GM12878 (cell line): ENCODE measurements at regions of chr11 and their contacts with region 1.

Region 1: DNA sequence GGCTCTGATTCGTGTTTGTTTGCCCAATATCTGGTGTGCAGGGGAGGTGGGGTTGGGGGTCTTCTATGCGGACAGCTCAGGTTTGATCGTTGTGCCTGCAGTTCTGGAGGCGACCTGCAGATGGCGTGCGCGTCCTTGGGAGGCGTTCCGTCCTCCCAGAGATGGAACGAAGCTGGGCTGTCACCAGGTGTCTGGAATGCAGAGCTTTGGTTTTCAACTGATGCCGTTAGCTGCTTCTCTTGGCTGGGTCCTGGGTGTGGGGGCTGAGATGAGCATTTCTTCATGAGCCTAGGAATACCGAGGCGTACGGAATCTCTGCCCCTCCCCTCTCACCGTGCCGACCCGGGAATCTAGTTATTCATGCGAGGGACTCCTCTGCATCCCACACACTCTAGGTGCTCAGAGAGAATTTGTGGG is 98.6 kb downstream of the CEP164 start:
- DNase-seq: no peak
- ATAC-seq: peak; percentile 83
- H3K4me3 ChIP-seq: no peak overlapping the region
- H3K27ac ChIP-seq: no peak overlapping the region
- H3K4me1 ChIP-seq: no peaks in the 10 kb centered on the region
- H3K27me3 ChIP-seq: no peaks in the 10 kb centered on the region
- CTCF ChIP-seq: peak; percentile 96 to 100 (median 98)
- EP300 ChIP-seq: no peak
- POLR2A ChIP-seq: no peak
- RAD21 ChIP-seq: peak; percentile 95

Region 2: DNA sequence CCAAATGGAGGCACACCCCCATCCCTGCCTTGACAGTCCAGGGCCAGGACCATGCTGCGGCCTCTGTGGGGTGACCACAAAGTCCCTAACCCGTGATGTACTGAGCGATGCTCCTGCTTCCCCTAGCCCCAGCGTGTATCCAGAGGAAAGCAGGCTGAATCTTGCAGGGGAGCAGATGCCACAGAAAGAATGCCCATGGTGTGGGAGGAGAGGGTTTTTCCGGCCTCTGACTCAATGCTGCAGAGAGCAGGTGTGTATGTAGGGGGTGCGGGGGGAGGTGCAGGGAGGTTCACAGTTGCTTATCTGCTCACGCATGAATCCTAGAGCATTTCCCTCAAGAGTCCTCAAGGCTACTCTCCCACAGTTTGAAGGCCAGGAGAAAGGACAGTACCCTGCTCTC is 32.0 kb after region 1 on chr11:
- CTCF ChIA-PET with region 1: interaction called, 39 read pairs
- POLR2A ChIA-PET with region 1: no interaction called
- RAD21 ChIA-PET with region 1: interaction called, 22 read pairs
- SMC1A ChIA-PET with region 1: interaction called, 21 read pairs
- in situ Hi-C with region 1: no loop called
- intact Hi-C with region 1: no loop called
- DNase-seq: no peak
- ATAC-seq: peak; percentile 70
- H3K4me3 ChIP-seq: peak overlapping the region; percentile 48; the same call in 1 of the 2 replicates
- H3K27ac ChIP-seq: peak overlapping the region; percentile 57
- H3K4me1 ChIP-seq: peaks cover 48% of the 10 kb centered on the region
- H3K27me3 ChIP-seq: no peaks in the 10 kb centered on the region
- CTCF ChIP-seq: no peak
- EP300 ChIP-seq: peak; percentile 58 to 81; a peak in 3 of 4 replicates
- POLR2A ChIP-seq: 0 out of 2 replicates have a peak, but pooled peaks have one; percentile 36
- RAD21 ChIP-seq: no peak

Region 3: DNA sequence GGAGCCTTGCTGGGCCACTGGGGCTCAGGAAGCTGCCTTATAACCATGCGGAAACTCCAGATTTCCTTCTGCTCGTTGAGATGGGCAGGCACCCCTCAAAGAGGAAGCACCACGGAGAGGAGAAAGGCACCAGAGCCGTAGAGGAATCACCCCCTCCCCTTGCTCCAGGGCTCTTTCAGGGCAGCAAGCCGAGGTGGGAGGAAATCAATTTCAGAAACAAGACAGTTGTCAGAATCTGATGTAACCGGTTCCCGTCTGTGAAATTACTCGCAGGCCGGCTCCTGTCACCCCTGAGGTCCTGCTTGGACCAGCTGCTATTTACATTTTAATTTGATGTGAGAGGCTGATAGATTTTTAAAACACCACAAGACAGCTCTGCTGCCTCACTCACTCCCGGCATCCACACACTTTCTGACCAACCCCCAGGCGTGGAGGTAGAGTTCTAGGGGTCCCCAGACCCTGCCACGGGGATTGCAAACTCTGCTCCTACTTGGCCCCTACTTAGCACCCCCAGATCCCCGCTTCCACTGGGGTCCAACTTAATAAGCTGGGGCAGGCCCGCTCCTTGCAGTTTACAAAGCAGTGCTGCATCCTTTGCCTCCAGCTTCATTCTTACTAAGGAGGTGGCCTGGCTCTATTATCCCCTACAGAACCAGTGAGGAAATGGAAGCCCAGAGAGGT is 63.9 kb after region 1 on chr11:
- CTCF ChIA-PET with region 1: interaction called, 12 read pairs
- POLR2A ChIA-PET with region 1: no interaction called
- RAD21 ChIA-PET with region 1: interaction called, 6 read pairs
- SMC1A ChIA-PET with region 1: interaction called, 10 read pairs
- in situ Hi-C with region 1: no loop called
- intact Hi-C with region 1: no loop called
- DNase-seq: no peak
- ATAC-seq: peak; percentile 39
- H3K4me3 ChIP-seq: no peak overlapping the region
- H3K27ac ChIP-seq: no peak overlapping the region
- H3K4me1 ChIP-seq: no peaks in the 10 kb centered on the region
- H3K27me3 ChIP-seq: peaks cover under 1 to 8% of the 10 kb centered on the region in 2 experiments
- CTCF ChIP-seq: no peak
- EP300 ChIP-seq: no peak
- POLR2A ChIP-seq: no peak
- RAD21 ChIP-seq: no peak

Region 4: DNA sequence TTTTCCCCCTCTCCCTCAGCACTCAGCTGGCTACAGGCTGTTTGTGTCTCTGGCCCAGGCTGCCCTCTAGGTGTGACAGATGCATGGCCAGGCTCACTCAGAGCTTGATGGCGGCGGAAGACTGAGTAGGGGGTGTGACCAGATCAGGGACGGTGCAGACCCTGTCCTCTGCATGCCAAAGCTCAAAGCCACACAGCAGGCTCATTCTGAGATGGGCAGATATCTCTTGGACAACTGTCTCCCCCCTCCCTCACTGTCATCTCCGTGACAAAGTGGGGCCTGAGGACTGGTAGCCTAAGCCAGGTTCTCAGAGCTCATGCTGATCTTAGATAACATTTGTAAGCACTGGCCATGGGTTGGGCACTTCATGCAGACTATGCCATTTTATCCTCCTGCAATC is 139.4 kb after region 1 on chr11:
- CTCF ChIA-PET with region 1: interaction called, 10 read pairs
- POLR2A ChIA-PET with region 1: no interaction called
- RAD21 ChIA-PET with region 1: no interaction called
- SMC1A ChIA-PET with region 1: interaction called, 4 read pairs
- in situ Hi-C with region 1: no loop called
- intact Hi-C with region 1: no loop called
- DNase-seq: no peak
- ATAC-seq: no peak
- H3K4me3 ChIP-seq: no peak overlapping the region
- H3K27ac ChIP-seq: no peak overlapping the region
- H3K4me1 ChIP-seq: no peaks in the 10 kb centered on the region
- H3K27me3 ChIP-seq: peaks cover 1 to 3% of the 10 kb centered on the region in 2 experiments; a peak in 2 of 4 replicates
- CTCF ChIP-seq: 0 out of 6 replicates have a peak, but pooled peaks of 1 of the 3 experiments have one; percentile 0
- EP300 ChIP-seq: no peak
- POLR2A ChIP-seq: no peak
- RAD21 ChIP-seq: no peak

Region 5: GRCh38 chr11:117621226-117621625 is 194.9 kb after region 1 on chr11:
- CTCF ChIA-PET with region 1: interaction called, 156 read pairs
- POLR2A ChIA-PET with region 1: no interaction called
- RAD21 ChIA-PET with region 1: interaction called, 35 read pairs
- SMC1A ChIA-PET with region 1: interaction called, 32 read pairs
- in situ Hi-C with region 1: loop called (anchors 5 kb)
- intact Hi-C with region 1: loop called (anchors 1 kb)
- DNase-seq: no peak
- ATAC-seq: peak; percentile 65
- H3K4me3 ChIP-seq: no peak overlapping the region
- H3K27ac ChIP-seq: no peak overlapping the region
- H3K4me1 ChIP-seq: no peaks in the 10 kb centered on the region
- H3K27me3 ChIP-seq: no peaks in the 10 kb centered on the region; a peak in 1 of 4 replicates
- CTCF ChIP-seq: peak; percentile 37 to 68 (median 65)
- EP300 ChIP-seq: no peak
- POLR2A ChIP-seq: no peak
- RAD21 ChIP-seq: peak; percentile 44

Region 6: DNA sequence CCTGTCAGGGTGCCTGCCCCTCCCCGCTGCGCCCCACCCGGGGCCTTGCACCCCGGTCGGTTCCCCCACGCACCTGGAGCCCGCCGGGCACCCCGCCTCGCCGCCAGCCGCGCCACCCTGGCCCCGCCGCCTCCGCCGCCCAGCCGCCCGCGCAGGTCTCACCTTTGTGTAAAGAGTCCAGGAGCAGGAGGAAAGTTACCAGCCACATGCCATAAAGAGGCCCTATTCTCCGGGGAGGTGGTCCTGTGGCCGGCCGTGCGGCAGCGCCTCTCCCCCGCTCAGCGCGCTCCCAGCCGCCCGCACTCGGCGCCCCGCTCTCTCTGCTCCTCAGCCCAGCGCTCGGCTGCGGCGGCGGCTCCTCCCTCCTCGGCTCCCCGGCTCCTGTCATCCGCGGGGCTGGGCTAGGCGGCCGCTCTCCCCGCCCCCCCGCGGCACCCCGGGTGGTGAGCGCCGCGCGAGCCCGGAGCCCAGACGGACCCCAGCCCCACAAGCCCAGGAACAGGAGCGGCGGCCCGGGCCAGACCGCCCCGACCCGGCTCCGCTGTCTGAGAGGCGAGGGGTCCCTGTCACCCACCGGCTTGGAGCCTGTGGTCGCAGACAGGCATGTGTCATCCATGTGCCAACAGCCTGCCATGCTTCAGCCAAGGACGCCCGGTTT is 370.7 kb after region 1 on chr11 and contains the start of gene DSCAML1:
- CTCF ChIA-PET with region 1: interaction called, 25 read pairs
- POLR2A ChIA-PET with region 1: no interaction called
- RAD21 ChIA-PET with region 1: interaction called, 12 read pairs
- SMC1A ChIA-PET with region 1: interaction called, 8 read pairs
- in situ Hi-C with region 1: no loop called
- intact Hi-C with region 1: no loop called
- DNase-seq: no peak
- ATAC-seq: no peak
- H3K4me3 ChIP-seq: no peak within 1 kb of the TSS
- H3K27ac ChIP-seq: no peak within 1 kb of the TSS
- H3K4me1 ChIP-seq: no peaks in the 10 kb centered on the region
- H3K27me3 ChIP-seq: peaks cover 4 to 8% of the 10 kb centered on the region in 2 experiments; a peak in 3 of 4 replicates
- CTCF ChIP-seq: no peak
- EP300 ChIP-seq: no peak
- POLR2A ChIP-seq: no peak
- RAD21 ChIP-seq: no peak
- polyA plus RNA-seq, gene DSCAML1: 0.03 TPM in 1 of 2 experiments, not detected in the other

Region 7: DNA sequence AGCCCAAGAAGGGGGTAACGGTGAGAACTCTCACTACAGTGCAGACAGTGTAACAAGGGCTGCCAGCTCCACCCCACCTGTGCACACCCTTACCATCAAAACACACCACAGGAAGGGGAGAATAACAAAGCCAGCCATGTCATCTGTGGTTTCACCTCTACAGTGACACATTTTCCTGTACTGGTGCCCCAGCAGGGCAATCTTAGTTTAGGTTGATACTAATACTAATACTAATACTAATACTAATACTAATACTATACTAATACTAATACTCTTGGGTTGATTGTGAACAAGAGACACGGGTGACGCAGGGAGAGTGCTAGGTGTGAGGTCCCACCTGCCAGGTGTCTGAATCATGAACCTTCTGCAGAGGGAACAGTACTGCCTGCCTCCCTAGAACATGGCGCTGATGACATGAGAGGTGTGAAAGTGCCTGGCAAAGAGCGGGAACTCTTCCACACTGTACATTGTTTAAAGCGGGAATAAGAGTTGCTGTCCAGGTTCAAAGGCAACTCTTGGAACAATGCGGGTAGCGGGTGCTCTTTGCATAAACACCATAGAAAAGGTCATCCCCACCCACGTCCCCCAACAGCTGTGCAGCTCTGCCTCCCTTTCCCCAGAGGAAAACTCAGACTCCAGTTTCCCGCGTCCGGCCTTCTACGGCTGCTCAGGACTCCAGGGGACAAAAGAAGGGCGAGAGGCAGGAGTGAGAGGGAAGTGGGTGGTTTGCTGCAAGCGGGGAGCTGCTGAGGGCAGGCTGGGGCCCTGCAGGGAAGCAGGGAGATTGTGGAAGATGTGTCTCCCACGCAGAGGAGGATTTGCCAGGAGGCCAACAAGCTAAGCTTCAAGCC is 625.6 kb after region 1 on chr11:
- CTCF ChIA-PET with region 1: interaction called, 8 read pairs
- POLR2A ChIA-PET with region 1: no interaction called
- RAD21 ChIA-PET with region 1: interaction called, 9 read pairs
- SMC1A ChIA-PET with region 1: interaction called, 6 read pairs
- in situ Hi-C with region 1: loop called (anchors 25 kb)
- intact Hi-C with region 1: no loop called
- DNase-seq: peak; percentile 23
- ATAC-seq: peak; percentile 81
- H3K4me3 ChIP-seq: no peak overlapping the region
- H3K27ac ChIP-seq: no peak overlapping the region
- H3K4me1 ChIP-seq: peaks cover 18% of the 10 kb centered on the region
- H3K27me3 ChIP-seq: no peaks in the 10 kb centered on the region
- CTCF ChIP-seq: no peak
- EP300 ChIP-seq: peak; percentile 14 to 42; a peak in 2 of 4 replicates
- POLR2A ChIP-seq: no peak
- RAD21 ChIP-seq: no peak